Psoas muscle (tissue), 8 donors: ENCODE measurements at regions of chrX and their contacts with region 1.

Region 1: GRCh38 chrX:75045369-75045768 is 110.7 kb downstream of the ABCB7 start:
- DNase-seq: no peak
- ATAC-seq: no peak
- H3K4me3 ChIP-seq: no peak overlapping the region
- H3K27ac ChIP-seq: no peak overlapping the region
- H3K4me1 ChIP-seq: no peaks in the 10 kb centered on the region
- H3K27me3 ChIP-seq: no peaks in the 10 kb centered on the region
- CTCF ChIP-seq: no peak

Region 2: GRCh38 chrX:75086731-75087195 is 41.4 kb after region 1 on chrX:
- intact Hi-C with region 1: loop called in 1 of 2 experiments (anchors 5 kb)
- DNase-seq: no peak
- ATAC-seq: no peak
- H3K4me3 ChIP-seq: no peak overlapping the region
- H3K27ac ChIP-seq: no peak overlapping the region
- H3K4me1 ChIP-seq: no peaks in the 10 kb centered on the region
- H3K27me3 ChIP-seq: peaks cover 0 to 4% (median 0%) of the 10 kb centered on the region in 3 donors
- CTCF ChIP-seq: no peak